ENCODE measurements at regions of chr1 and their contacts with region 1.

Region 1: DNA sequence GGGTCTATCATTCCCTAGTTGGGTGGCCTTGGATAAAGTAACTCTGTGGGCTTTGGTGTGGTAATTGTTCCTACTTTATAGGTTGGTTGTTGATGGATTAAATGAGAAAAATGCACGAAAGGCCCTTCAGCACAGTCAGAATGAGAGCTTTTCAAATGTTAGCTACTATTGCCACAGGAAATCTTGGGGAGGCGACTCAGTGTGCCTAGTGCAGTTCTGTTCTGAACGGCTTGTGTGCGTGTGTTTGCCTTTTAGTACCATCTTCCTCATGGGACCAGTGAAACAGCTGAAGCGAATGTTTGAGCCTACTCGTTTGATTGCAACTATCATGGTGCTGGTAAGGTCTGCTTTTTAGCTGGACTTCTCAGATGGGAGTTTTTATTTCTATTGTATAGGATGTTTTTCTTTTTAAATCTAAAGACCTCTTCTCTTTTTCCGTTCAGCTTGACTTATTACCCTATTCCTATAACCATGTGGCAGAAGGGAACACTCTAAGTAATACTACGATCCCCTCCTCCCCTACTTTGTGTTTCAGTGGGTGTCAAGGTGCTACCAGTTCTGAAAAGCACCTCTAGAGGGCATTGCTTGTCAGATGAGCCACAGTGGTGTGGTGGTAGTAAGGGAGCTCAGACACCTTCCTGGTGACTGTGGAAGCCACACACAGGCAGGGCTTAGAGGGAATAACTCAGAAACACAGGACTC is 9.2 kb downstream of the SFT2D2 start:
- DNase-seq: peak; percentile 39
- H3K4me3 Mint-ChIP-seq: peak overlapping the region; percentile 37
- H3K27ac Mint-ChIP-seq: peak overlapping the region; percentile 82
- H3K4me1 Mint-ChIP-seq: peaks cover 76% of the 10 kb centered on the region
- H3K27me3 Mint-ChIP-seq: no peaks in the 10 kb centered on the region

Region 2: GRCh38 chr1:168245042-168245441 is 10.0 kb after region 1 on chr1:
- intact Hi-C with region 1: loop called (anchors 1 kb)
- DNase-seq: no peak
- H3K4me3 Mint-ChIP-seq: no peak overlapping the region
- H3K27ac Mint-ChIP-seq: no peak overlapping the region
- H3K4me1 Mint-ChIP-seq: peaks cover 50% of the 10 kb centered on the region
- H3K27me3 Mint-ChIP-seq: no peaks in the 10 kb centered on the region

Region 3: DNA sequence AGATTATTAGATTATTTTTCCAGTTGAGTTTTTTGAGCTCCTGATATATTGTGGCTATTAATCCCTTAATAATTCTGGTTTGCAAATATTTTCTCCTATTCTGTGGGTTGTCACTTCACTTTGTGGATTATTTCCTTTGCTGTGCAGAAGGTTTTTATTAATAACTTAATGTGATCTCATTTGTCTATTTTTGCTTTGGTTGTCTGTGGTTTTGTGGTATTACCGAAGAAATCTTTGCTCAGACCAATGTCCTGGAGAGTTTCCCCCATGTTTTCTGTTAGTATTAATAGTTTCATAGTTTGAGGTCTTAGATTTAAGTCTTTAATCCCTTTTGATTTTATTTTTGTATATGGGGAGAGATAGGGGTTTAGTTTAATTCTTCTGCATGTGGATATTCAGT is 38.6 kb after region 1 on chr1:
- intact Hi-C with region 1: no loop called
- DNase-seq: no peak
- H3K4me3 Mint-ChIP-seq: no peak overlapping the region
- H3K27ac Mint-ChIP-seq: no peak overlapping the region
- H3K4me1 Mint-ChIP-seq: no peaks in the 10 kb centered on the region
- H3K27me3 Mint-ChIP-seq: peaks cover 4% of the 10 kb centered on the region

Region 4: GRCh38 chr1:168321945-168322344 is 86.9 kb after region 1 on chr1:
- intact Hi-C with region 1: loop called (anchors 1 kb)
- DNase-seq: no peak
- H3K4me3 Mint-ChIP-seq: no peak overlapping the region
- H3K27ac Mint-ChIP-seq: no peak overlapping the region
- H3K4me1 Mint-ChIP-seq: peaks cover 21% of the 10 kb centered on the region
- H3K27me3 Mint-ChIP-seq: peaks cover 2% of the 10 kb centered on the region

Region 5: GRCh38 chr1:168365719-168366479 is 130.9 kb after region 1 on chr1:
- intact Hi-C with region 1: loop called (anchors 1 kb)
- DNase-seq: no peak
- H3K4me3 Mint-ChIP-seq: no peak overlapping the region
- H3K27ac Mint-ChIP-seq: no peak overlapping the region
- H3K4me1 Mint-ChIP-seq: peaks cover 27% of the 10 kb centered on the region
- H3K27me3 Mint-ChIP-seq: peaks cover 7% of the 10 kb centered on the region

Region 6: GRCh38 chr1:168673974-168674683 is 439.1 kb after region 1 on chr1:
- intact Hi-C with region 1: no loop called
- DNase-seq: no peak
- H3K4me3 Mint-ChIP-seq: no peak overlapping the region
- H3K27ac Mint-ChIP-seq: no peak overlapping the region
- H3K4me1 Mint-ChIP-seq: no peaks in the 10 kb centered on the region
- H3K27me3 Mint-ChIP-seq: peaks cover 5% of the 10 kb centered on the region

Region 7: DNA sequence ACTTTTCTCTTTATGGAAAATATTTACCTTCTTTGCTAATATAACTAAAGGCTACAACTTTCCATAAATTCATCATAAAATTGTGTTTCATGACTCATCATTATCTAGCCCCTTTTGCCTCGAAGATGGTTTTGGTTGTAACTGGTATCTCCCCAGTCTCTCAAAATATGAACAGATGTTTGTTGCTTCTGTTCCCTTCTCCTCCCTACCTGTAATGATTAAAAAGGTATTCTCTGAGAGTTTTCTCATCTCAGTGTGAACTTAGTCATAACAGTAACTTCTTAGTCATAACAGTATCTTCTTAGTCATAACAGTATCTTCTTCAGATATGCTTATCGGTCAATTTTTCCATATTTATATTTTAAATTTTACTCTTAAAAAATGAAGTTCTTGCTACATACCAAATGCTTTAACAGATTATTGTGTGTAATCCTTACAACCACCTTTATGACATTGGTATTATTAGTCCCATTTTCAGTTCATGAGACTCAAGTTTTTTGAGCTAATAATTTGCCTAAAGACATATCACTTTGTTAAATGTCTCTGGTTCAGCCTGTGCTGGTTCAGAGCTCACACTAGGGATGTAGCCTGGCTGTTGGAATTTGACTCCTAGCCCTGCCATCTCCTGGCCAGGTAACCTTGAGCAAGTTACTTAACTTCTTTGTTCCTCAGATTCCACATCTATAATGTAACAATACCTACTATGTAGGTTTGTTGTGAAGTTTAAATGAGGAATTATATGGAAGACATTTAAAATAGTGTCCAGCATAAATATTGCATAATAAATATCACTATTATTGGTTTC is 904.1 kb after region 1 on chr1:
- intact Hi-C with region 1: loop called (anchors 5 kb)
- DNase-seq: no peak
- H3K4me3 Mint-ChIP-seq: no peak overlapping the region
- H3K27ac Mint-ChIP-seq: peak overlapping the region; percentile 80
- H3K4me1 Mint-ChIP-seq: peaks cover 20% of the 10 kb centered on the region
- H3K27me3 Mint-ChIP-seq: peaks cover 4% of the 10 kb centered on the region

Region 8: DNA sequence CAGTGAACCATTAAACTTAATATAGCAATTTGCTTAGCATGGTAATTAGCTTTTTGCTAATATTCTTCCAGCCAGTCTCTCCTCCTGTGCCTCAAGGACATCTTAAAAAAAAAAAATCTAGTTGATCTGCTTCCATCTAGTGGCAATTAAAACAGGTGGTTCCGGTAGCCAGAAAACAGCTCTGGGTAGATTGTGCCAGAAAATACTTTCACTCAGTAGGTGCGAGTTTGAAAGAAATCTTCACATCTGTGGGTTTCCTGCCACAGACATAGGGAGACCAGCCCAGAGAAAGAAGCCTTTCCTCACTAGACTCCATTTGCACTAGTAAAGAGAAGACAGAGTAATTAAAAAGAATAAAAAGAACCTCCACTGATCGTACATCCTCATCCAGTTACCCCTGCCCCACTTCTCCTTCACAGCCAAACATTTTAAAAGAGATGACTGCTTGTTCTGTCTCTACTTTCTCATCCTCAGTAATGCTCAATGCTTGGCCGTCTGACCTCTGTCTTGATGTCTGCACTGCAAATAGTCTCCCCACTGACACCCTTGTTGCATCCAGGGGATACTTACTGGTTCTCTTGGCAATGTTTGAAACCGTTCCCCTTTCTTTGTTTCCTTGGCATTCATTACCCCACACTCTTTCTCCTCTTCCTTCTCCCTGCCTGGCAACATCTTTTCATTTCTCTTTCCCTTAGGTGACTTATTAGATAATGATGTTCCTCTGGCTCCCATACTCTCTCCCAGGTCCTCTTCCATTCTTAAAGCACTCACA is 1459.5 kb after region 1 on chr1:
- intact Hi-C with region 1: loop called (anchors 2 kb)
- DNase-seq: peak; percentile 56
- H3K4me3 Mint-ChIP-seq: peak overlapping the region; percentile 28
- H3K27ac Mint-ChIP-seq: peak overlapping the region; percentile 90
- H3K4me1 Mint-ChIP-seq: peaks cover 96% of the 10 kb centered on the region
- H3K27me3 Mint-ChIP-seq: no peaks in the 10 kb centered on the region

Measured in activated T-helper 1 cell treated with anti-CD3 and anti-CD28 coated beads, Interleukin-12 subunit alpha, Interleukin-12 subunit beta, Interleukin-2, Interleukin-4 antibody, amounts not matched to agents 30 ng/mL and 10 ng/mL and 1 ng/mL, durations not matched to agents 14 hours and 24 hours and 36 hours (primary cell).